ENCODE measurements at regions of chr6 and their contacts with region 1.

Region 1: DNA sequence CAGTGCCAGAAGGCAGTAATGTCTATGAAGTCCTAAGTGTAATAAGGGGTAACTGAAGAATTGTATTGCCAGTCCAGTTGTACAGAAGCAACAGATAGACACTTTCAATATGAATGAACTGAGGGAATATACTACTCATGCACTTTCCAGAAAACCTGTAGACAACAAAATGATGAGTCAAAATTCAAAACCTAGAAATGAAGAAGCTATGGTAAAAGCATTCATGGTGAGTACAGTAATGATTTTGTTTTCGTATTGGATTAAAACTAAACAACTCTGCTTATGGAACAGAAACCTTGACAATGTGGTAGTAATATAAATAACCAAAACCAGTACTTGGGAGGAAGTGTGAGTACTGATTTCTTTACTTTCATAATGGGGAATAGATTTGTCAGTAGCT is 35.0 kb downstream of the ARMC2 start:
- DNase-seq: no peak
- ATAC-seq: peak; percentile 93
- H3K4me3 Mint-ChIP-seq: no peak overlapping the region
- H3K27ac Mint-ChIP-seq: peak overlapping the region; percentile 60
- H3K4me1 Mint-ChIP-seq: peaks cover 34% of the 10 kb centered on the region
- H3K27me3 Mint-ChIP-seq: peaks cover 16% of the 10 kb centered on the region

Region 2: GRCh38 chr6:108565893-108566292 is 317.3 kb before region 1 on chr6:
- CTCF ChIA-PET with region 1: interaction called, 3 read pairs
- POLR2A ChIA-PET with region 1: no interaction called
- intact Hi-C with region 1: loop called in 1 of 2 experiments (anchors 2 kb)
- DNase-seq: no peak
- ATAC-seq: no peak
- H3K4me3 Mint-ChIP-seq: no peak overlapping the region
- H3K27ac Mint-ChIP-seq: peak overlapping the region; percentile 15
- H3K4me1 Mint-ChIP-seq: peaks cover 68% of the 10 kb centered on the region
- H3K27me3 Mint-ChIP-seq: peaks cover 11% of the 10 kb centered on the region

Region 3: GRCh38 chr6:108661430-108661829 is 221.7 kb before region 1 on chr6:
- CTCF ChIA-PET with region 1: no interaction called
- POLR2A ChIA-PET with region 1: no interaction called
- intact Hi-C with region 1: loop called (anchors 10 kb)
- DNase-seq: no peak
- ATAC-seq: peak; percentile 64
- H3K4me3 Mint-ChIP-seq: no peak overlapping the region
- H3K27ac Mint-ChIP-seq: no peak overlapping the region
- H3K4me1 Mint-ChIP-seq: peaks cover 25% of the 10 kb centered on the region
- H3K27me3 Mint-ChIP-seq: no peaks in the 10 kb centered on the region

Region 4: GRCh38 chr6:108714766-108715414 is 168.3 kb before region 1 on chr6:
- CTCF ChIA-PET with region 1: no interaction called
- POLR2A ChIA-PET with region 1: no interaction called
- intact Hi-C with region 1: no loop called
- DNase-seq: no peak
- ATAC-seq: no peak
- H3K4me3 Mint-ChIP-seq: no peak overlapping the region
- H3K27ac Mint-ChIP-seq: no peak overlapping the region
- H3K4me1 Mint-ChIP-seq: peaks cover 10% of the 10 kb centered on the region
- H3K27me3 Mint-ChIP-seq: no peaks in the 10 kb centered on the region

Region 5: DNA sequence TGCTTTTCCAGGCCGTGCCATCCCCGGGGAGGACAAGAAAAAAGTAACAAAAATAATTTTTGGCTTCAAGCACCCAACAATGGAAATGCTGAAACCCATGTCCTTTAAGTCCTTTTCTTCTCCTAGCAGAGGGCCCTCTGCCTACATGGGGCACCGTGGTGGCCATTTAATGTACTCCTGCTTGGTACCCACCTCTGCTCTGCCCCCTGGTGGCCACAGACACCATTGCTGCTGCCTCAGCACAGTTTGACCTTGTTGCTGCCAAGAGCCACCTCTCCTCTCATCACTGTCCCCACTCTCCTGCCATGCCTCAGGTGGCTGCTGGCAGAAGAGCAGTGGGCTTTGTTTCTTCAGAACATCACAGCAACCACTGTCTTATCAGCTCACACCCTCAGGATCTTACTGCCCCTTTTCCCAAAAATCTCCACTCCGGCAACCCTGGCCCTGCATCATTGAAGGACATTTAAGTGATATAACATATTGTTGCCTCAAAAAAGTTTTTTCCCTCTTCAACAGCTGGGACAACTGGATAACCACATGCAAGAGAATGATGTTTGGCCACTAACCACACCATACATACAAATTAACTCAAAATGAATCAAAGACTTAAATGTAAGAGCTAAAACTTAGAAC is 47.8 kb before region 1 on chr6:
- CTCF ChIA-PET with region 1: interaction called, 3 read pairs
- POLR2A ChIA-PET with region 1: interaction called, 3 read pairs
- intact Hi-C with region 1: loop called (anchors 2 to 5 kb)
- DNase-seq: peak; percentile 93
- ATAC-seq: peak; percentile 96
- H3K4me3 Mint-ChIP-seq: no peak overlapping the region
- H3K27ac Mint-ChIP-seq: no peak overlapping the region
- H3K4me1 Mint-ChIP-seq: peaks cover 20% of the 10 kb centered on the region
- H3K27me3 Mint-ChIP-seq: no peaks in the 10 kb centered on the region

Region 6: GRCh38 chr6:108896111-108896661 is 13.0 kb after region 1 on chr6:
- CTCF ChIA-PET with region 1: interaction called, 15 read pairs
- POLR2A ChIA-PET with region 1: no interaction called
- intact Hi-C with region 1: no loop called
- DNase-seq: no peak
- ATAC-seq: peak; percentile 42
- H3K4me3 Mint-ChIP-seq: no peak overlapping the region
- H3K27ac Mint-ChIP-seq: no peak overlapping the region
- H3K4me1 Mint-ChIP-seq: peaks cover 13% of the 10 kb centered on the region
- H3K27me3 Mint-ChIP-seq: no peaks in the 10 kb centered on the region

Region 7: GRCh38 chr6:108921547-108922361 is 38.6 kb after region 1 on chr6:
- CTCF ChIA-PET with region 1: interaction called, 6 read pairs
- POLR2A ChIA-PET with region 1: no interaction called
- intact Hi-C with region 1: loop called (anchors 1 kb)
- DNase-seq: peak; percentile 58
- ATAC-seq: peak; percentile 91
- H3K4me3 Mint-ChIP-seq: no peak overlapping the region
- H3K27ac Mint-ChIP-seq: peak overlapping the region; percentile 26
- H3K4me1 Mint-ChIP-seq: peaks cover 33% of the 10 kb centered on the region
- H3K27me3 Mint-ChIP-seq: peaks cover 7% of the 10 kb centered on the region

Region 8: GRCh38 chr6:109202409-109203284 is 319.5 kb after region 1 on chr6:
- CTCF ChIA-PET with region 1: no interaction called
- POLR2A ChIA-PET with region 1: no interaction called
- intact Hi-C with region 1: loop called in 1 of 2 experiments (anchors 5 kb)
- DNase-seq: peak; percentile 59
- ATAC-seq: peak; percentile 95
- H3K4me3 Mint-ChIP-seq: no peak overlapping the region
- H3K27ac Mint-ChIP-seq: peak overlapping the region; percentile 59
- H3K4me1 Mint-ChIP-seq: peaks cover 14% of the 10 kb centered on the region
- H3K27me3 Mint-ChIP-seq: no peaks in the 10 kb centered on the region